Gastrocnemius medialis (tissue), 4 donors: ENCODE measurements at regions of chr12 and their contacts with region 1.

Region 1: GRCh38 chr12:68317047-68317667 is 15.0 kb downstream of the MDM1 start:
- DNase-seq: no peak
- ATAC-seq: no peak
- H3K4me3 ChIP-seq: no peak overlapping the region
- H3K27ac ChIP-seq: no peak overlapping the region
- H3K4me1 ChIP-seq: peaks cover 0 to 20% of the 10 kb centered on the region in 2 donors
- H3K27me3 ChIP-seq: no peaks in the 10 kb centered on the region
- CTCF ChIP-seq: peak; percentile 23 to 70 (median 52)
- POLR2A ChIP-seq: no peak

Region 2: DNA sequence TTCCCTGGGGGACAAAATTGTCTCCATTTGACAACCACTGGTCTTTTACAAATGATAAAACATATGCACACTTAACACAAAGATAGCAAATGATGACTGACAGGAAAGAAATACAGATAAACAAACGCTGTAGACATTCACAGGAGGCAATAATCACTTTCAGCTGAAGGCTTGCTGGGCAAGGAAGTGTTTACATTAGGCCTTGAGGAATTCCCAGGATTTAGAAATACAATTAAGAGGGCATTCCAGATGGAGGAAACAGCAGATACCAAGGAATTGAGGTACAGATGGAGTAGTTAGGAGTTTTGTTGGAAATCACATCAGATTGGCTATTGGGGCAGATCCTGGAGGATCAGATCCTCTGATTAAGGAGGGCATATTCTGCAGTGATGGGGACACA is 574.7 kb before region 1 on chr12:
- in situ Hi-C with region 1: no loop called
- intact Hi-C with region 1: no loop called
- DNase-seq: no peak
- ATAC-seq: no peak
- H3K4me3 ChIP-seq: no peak overlapping the region
- H3K27ac ChIP-seq: no peak overlapping the region
- H3K4me1 ChIP-seq: peaks cover 0 to 7% of the 10 kb centered on the region in 2 donors
- H3K27me3 ChIP-seq: no peaks in the 10 kb centered on the region
- CTCF ChIP-seq: no peak
- POLR2A ChIP-seq: no peak

Region 3: GRCh38 chr12:68236421-68237059 is 80.6 kb before region 1 on chr12:
- in situ Hi-C with region 1: loop called in 1 of 4 experiments (anchors 10 kb)
- intact Hi-C with region 1: no loop called
- DNase-seq: no peak
- ATAC-seq: peak in 1 of 2 donors; percentile 81
- H3K4me3 ChIP-seq: peak overlapping the region; percentile 42 to 51 (median 44)
- H3K27ac ChIP-seq: peak overlapping the region in 1 of 4 donors; percentile 5
- H3K4me1 ChIP-seq: peaks cover 8% of the 10 kb centered on the region in 2 donors
- H3K27me3 ChIP-seq: no peaks in the 10 kb centered on the region
- CTCF ChIP-seq: no peak
- POLR2A ChIP-seq: no peak

Region 4: DNA sequence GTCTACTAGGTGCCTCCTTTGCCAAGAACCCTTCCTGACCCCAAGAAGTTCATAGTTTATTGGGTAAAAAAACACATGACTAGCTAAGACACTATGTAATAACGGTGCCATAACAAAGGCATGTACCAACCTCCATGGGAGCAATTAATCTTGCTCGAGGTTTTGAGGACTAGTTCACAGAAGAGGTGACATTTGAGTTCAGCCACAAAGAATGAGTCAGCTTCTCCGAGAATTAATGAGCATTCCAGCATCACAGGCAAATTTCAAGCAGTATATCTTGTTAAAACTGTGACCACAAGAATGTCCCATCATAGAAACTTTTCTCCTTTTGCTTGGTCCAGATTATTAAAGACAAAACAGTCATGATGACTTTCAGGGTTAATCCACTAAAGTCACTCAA is 180.5 kb after region 1 on chr12:
- in situ Hi-C with region 1: no loop called
- intact Hi-C with region 1: no loop called
- DNase-seq: no peak
- ATAC-seq: no peak
- H3K4me3 ChIP-seq: no peak overlapping the region
- H3K27ac ChIP-seq: no peak overlapping the region
- H3K4me1 ChIP-seq: peaks cover 4 to 6% of the 10 kb centered on the region in 2 donors
- H3K27me3 ChIP-seq: no peaks in the 10 kb centered on the region
- CTCF ChIP-seq: no peak
- POLR2A ChIP-seq: no peak